ENCODE measurements at regions of chr1 and their contacts with region 1.

Region 1: GRCh38 chr1:45686317-45687013 is at the start of gene GPBP1L1:
- DNase-seq: peak; percentile 98
- ATAC-seq: peak; percentile 73
- H3K4me3 Mint-ChIP-seq: peak within 1 kb of the TSS; percentile 99
- H3K27ac Mint-ChIP-seq: peak within 1 kb of the TSS; percentile 100
- H3K4me1 Mint-ChIP-seq: peaks cover 53% of the 10 kb centered on the region
- H3K27me3 Mint-ChIP-seq: no peaks in the 10 kb centered on the region
- CTCF ChIP-seq: no peak
- total RNA-seq, gene GPBP1L1: 133 and 138 TPM in 2 replicates

Region 2: GRCh38 chr1:44786138-44786840 is 900.2 kb before region 1 on chr1:
- CTCF ChIA-PET with region 1: no interaction called
- POLR2A ChIA-PET with region 1: no interaction called
- intact Hi-C with region 1: loop called (anchors 5 kb)
- DNase-seq: peak; percentile 81
- ATAC-seq: peak; percentile 79
- H3K4me3 Mint-ChIP-seq: peak overlapping the region; percentile 75
- H3K27ac Mint-ChIP-seq: peak overlapping the region; percentile 86
- H3K4me1 Mint-ChIP-seq: peaks cover 32% of the 10 kb centered on the region
- H3K27me3 Mint-ChIP-seq: no peaks in the 10 kb centered on the region
- CTCF ChIP-seq: peak; percentile 100

Region 3: GRCh38 chr1:45521398-45522323 is 164.8 kb before region 1 on chr1 and contains the start of gene PRDX1:
- CTCF ChIA-PET with region 1: interaction called, 3 read pairs
- POLR2A ChIA-PET with region 1: interaction called, 19 read pairs
- intact Hi-C with region 1: no loop called
- DNase-seq: peak; percentile 98
- ATAC-seq: peak; percentile 87
- H3K4me3 Mint-ChIP-seq: peak within 1 kb of the TSS; percentile 93
- H3K27ac Mint-ChIP-seq: peak within 1 kb of the TSS; percentile 92
- H3K4me1 Mint-ChIP-seq: peaks cover 49% of the 10 kb centered on the region
- H3K27me3 Mint-ChIP-seq: no peaks in the 10 kb centered on the region
- CTCF ChIP-seq: no peak
- total RNA-seq, gene PRDX1: 351 and 413 TPM in 2 replicates

Region 4: DNA sequence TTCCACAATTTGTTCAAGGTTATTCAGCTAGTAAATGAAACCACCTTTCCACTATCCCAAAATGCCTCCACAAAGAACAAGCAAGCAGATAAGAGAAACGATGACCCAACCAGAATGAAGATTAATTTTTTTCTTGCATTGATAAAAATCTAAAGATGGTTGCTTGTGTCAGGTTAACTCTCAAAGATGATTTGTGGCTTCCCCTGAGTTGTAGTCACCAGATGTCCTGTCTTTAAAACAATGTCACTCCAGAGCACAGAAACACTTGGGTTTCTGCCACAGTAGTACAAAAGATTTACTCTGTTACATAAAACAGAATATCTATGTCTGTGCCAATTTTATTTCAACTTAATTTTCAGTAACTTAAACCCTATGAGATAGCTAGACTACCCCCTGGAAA is 51.3 kb before region 1 on chr1:
- CTCF ChIA-PET with region 1: no interaction called
- POLR2A ChIA-PET with region 1: no interaction called
- intact Hi-C with region 1: no loop called
- DNase-seq: no peak
- ATAC-seq: no peak
- H3K4me3 Mint-ChIP-seq: no peak overlapping the region
- H3K27ac Mint-ChIP-seq: no peak overlapping the region
- H3K4me1 Mint-ChIP-seq: no peaks in the 10 kb centered on the region
- H3K27me3 Mint-ChIP-seq: no peaks in the 10 kb centered on the region
- CTCF ChIP-seq: no peak

Region 5: GRCh38 chr1:45750298-45751038 is 64.0 kb after region 1 on chr1 and contains the start of gene IPP:
- CTCF ChIA-PET with region 1: interaction called, 4 read pairs
- POLR2A ChIA-PET with region 1: interaction called, 20 read pairs
- intact Hi-C with region 1: loop called (anchors 1 kb)
- DNase-seq: peak; percentile 96
- ATAC-seq: peak; percentile 95
- H3K4me3 Mint-ChIP-seq: peak within 1 kb of the TSS; percentile 93
- H3K27ac Mint-ChIP-seq: peak within 1 kb of the TSS; percentile 99
- H3K4me1 Mint-ChIP-seq: peaks cover 17% of the 10 kb centered on the region
- H3K27me3 Mint-ChIP-seq: no peaks in the 10 kb centered on the region
- CTCF ChIP-seq: no peak
- total RNA-seq, gene IPP: 10.2 and 11.4 TPM in 2 replicates

Region 6: GRCh38 chr1:46132529-46133180 is 446.2 kb after region 1 on chr1 and contains the start of gene PIK3R3:
- CTCF ChIA-PET with region 1: no interaction called
- POLR2A ChIA-PET with region 1: no interaction called
- intact Hi-C with region 1: loop called (anchors 1 kb)
- DNase-seq: peak; percentile 75
- ATAC-seq: peak; percentile 89
- H3K4me3 Mint-ChIP-seq: peak within 1 kb of the TSS; percentile 93
- H3K27ac Mint-ChIP-seq: peak within 1 kb of the TSS; percentile 83
- H3K4me1 Mint-ChIP-seq: peaks cover 25% of the 10 kb centered on the region
- H3K27me3 Mint-ChIP-seq: peaks cover 34% of the 10 kb centered on the region
- CTCF ChIP-seq: no peak
- total RNA-seq, gene PIK3R3: 1.0 and 1.3 TPM in 2 replicates

Region 7: DNA sequence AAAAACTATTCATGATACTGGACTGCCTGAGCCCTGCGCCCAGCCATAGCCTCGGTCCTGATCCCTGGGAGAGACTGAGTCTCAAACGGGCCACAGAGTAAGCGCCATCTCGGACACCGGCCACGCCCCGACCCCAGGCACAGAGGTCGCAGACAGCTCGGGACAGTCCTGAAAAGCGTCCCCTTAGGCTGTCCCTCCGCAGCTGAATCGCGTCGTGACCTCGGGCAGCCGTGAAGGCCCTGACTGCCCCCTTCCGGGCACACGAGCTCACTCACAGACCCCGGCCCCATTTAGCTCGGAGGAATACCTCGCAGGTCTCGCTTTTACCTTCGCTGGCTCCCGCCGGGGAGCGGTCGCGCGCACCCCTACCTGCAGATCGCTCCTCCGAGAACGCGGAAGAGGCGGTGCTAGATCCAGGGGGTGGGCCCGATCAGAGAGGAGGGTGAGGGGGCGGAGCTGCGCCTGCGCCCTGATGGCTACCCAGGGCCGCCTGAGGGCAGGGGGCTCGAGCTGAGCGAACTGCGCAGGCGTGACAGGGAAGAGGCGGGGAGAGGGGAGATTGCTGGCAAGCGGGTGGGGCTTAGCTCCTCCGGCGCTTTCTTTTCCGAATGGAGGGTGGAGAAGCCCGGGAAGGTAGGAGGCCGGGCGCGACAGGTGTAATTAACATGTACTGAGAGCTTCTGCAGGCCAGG is 917.5 kb after region 1 on chr1 and contains the start of gene MKNK1:
- CTCF ChIA-PET with region 1: no interaction called
- POLR2A ChIA-PET with region 1: no interaction called
- intact Hi-C with region 1: loop called (anchors 5 kb)
- DNase-seq: peak; percentile 97
- ATAC-seq: peak; percentile 99
- H3K4me3 Mint-ChIP-seq: peak within 1 kb of the TSS; percentile 95
- H3K27ac Mint-ChIP-seq: peak within 1 kb of the TSS; percentile 86
- H3K4me1 Mint-ChIP-seq: peaks cover 17% of the 10 kb centered on the region
- H3K27me3 Mint-ChIP-seq: no peaks in the 10 kb centered on the region
- CTCF ChIP-seq: no peak
- total RNA-seq, gene MKNK1: 42.3 and 45.0 TPM in 2 replicates

Measured in activated B cell treated with CpG ODN at 0.5 μM for 24 hours (primary cell).